ENCODE measurements at regions of chr22 and their contacts with region 1.

Region 1: GRCh38 chr22:22348127-22348814 is 103.7 kb downstream of the VPREB1 start:
- DNase-seq: no peak
- CTCF ChIP-seq: peak; percentile 17

Region 2: GRCh38 chr22:22397277-22397870 is 49.1 kb after region 1 on chr22:
- CTCF ChIA-PET with region 1: interaction called, 11 read pairs
- POLR2A ChIA-PET with region 1: no interaction called
- DNase-seq: peak; percentile 3
- CTCF ChIP-seq: no peak